IMR-90 (cell line): ENCODE measurements at regions of chr14 and their contacts with region 1.

Region 1: DNA sequence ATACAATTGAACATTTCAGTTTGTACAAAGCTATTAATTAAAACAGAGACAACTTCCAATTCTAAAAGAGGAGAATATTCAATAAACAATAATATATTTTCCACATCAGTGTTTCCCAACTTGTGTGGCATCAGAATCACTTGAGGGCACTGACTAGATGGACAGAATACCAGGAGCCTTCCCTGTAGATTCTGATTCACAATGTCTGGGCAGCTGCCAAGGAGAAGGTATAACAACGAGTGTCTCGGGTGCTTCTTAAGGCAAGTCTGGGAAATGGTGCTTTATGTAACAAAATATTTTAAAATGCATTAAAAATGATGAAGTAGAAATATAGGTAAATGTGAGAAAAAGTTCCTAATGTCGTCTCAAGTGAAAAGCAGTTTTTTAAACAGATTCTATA is 26.2 kb downstream of the GALC start:
- DNase-seq: peak; percentile 38
- ATAC-seq: no peak
- H3K4me3 ChIP-seq: no peak overlapping the region
- H3K27ac ChIP-seq: no peak overlapping the region
- H3K4me1 ChIP-seq: no peaks in the 10 kb centered on the region
- H3K27me3 ChIP-seq: no peaks in the 10 kb centered on the region
- CTCF ChIP-seq: no peak
- POLR2A ChIP-seq: no peak
- RAD21 ChIP-seq: no peak

Region 2: DNA sequence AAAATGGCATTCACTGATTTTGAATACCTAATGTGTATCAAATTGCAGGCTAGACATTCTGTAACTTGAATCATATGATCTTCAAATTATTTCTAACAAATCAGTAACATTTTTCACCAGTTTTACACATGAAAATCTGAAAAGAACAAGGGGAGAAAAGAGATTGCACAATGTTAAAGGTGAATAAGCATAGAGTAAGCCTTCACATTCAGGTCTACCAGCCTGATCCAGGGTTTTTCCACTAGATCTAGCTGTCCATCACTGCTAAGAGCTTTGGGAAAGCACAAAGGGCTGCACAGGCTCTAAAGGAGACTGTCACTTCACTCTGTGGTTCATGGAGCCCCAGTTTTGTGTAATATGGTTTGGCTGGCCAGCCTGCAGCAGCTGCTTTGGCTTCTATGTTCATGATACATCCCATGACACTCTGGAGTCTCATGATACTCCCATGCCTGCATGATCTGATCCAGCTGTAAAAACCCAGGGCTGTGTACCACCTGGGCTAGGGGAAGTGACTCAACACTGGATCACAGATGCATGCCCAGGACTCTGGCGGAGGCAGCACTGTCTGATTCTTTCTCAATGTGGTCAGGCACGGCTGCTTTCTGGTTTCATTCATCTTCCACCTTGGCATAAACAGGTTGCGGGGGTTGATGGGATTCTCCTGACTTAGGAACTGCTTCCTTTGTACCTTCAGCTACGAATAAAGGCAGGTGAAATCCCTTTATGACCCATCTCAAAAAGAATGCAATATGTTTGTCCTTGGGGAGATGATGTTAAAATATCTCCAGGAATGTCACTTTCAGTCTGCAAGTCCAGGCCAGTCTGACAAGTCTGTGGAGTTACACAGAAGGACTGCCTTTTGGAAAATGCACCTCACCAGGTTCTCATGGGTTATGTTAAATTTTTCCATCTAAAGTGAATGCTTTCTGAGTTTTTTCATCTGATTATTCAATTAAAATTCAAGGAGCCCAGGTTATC is 833.5 kb before region 1 on chr14:
- CTCF ChIA-PET with region 1: no interaction called
- POLR2A ChIA-PET with region 1: no interaction called
- dilution Hi-C with region 1: no loop called
- in situ Hi-C with region 1: no loop called
- intact Hi-C with region 1: no loop called
- DNase-seq: peak; percentile 94
- ATAC-seq: peak; percentile 79
- H3K4me3 ChIP-seq: no peak overlapping the region
- H3K27ac ChIP-seq: no peak overlapping the region
- H3K4me1 ChIP-seq: 0 out of 2 replicates have a peak, but pooled peaks cover 2% of the 10 kb centered on the region
- H3K27me3 ChIP-seq: no peaks in the 10 kb centered on the region
- CTCF ChIP-seq: no peak
- POLR2A ChIP-seq: no peak
- RAD21 ChIP-seq: no peak

Region 3: DNA sequence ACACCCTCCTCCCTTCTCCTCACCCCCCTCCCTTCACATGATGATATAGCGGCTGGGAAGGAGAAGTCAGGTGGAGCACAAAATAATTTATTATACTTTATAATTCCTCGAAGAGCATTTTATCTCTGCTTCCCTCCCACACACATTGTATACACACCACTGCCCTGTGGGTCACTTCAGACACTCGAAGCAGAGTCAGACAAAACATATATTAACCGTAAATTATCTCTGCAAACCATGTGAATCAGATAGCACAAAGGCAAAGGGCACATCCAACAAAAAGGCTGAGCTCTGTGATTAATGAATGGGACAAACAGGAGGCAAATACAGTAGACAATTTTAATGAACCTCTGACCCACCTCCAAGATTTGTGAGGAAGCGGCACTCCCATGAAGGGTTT is 424.5 kb before region 1 on chr14:
- CTCF ChIA-PET with region 1: no interaction called
- POLR2A ChIA-PET with region 1: no interaction called
- dilution Hi-C with region 1: no loop called
- in situ Hi-C with region 1: no loop called
- intact Hi-C with region 1: no loop called
- DNase-seq: no peak
- ATAC-seq: no peak
- H3K4me3 ChIP-seq: no peak overlapping the region
- H3K27ac ChIP-seq: no peak overlapping the region
- H3K4me1 ChIP-seq: no peaks in the 10 kb centered on the region
- H3K27me3 ChIP-seq: no peaks in the 10 kb centered on the region
- CTCF ChIP-seq: no peak
- POLR2A ChIP-seq: no peak
- RAD21 ChIP-seq: no peak

Region 4: DNA sequence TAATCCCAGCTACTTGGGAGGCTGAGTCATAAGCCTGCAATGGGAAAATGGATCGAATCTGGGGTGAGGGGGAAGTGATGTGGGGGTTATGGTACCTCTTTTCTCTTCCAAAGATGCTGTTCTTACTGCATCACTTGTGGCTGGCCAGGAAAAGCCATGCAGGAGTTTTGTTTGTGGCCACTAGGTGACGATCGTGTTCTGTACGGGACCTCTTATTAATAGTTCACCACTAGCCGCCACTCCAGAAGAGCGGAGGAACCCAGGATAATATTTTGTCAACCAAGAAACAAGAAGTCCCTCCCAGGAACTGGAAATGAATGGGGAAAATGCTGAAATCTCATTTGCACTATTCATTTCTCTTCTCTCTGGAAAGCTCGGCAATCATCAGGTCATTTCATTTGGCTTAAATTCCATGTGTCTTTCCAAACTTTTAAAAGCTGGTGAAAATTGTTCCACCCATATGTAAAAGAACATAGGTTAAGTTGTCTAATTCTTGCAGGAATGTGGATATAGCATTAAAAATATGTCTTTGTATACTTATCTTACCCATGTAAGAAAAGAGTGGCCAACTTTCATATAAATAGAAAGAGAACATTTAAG is 47.0 kb after region 1 on chr14:
- CTCF ChIA-PET with region 1: no interaction called
- POLR2A ChIA-PET with region 1: no interaction called
- dilution Hi-C with region 1: no loop called
- in situ Hi-C with region 1: no loop called
- intact Hi-C with region 1: no loop called
- DNase-seq: peak; percentile 58
- ATAC-seq: peak; percentile 94
- H3K4me3 ChIP-seq: no peak overlapping the region
- H3K27ac ChIP-seq: no peak overlapping the region
- H3K4me1 ChIP-seq: no peaks in the 10 kb centered on the region
- H3K27me3 ChIP-seq: no peaks in the 10 kb centered on the region; the same call in 1 of the 2 replicates
- CTCF ChIP-seq: peak; percentile 87
- POLR2A ChIP-seq: no peak
- RAD21 ChIP-seq: peak; percentile 78

Region 5: GRCh38 chr14:88078525-88078924 is 111.7 kb after region 1 on chr14:
- CTCF ChIA-PET with region 1: no interaction called
- POLR2A ChIA-PET with region 1: no interaction called
- dilution Hi-C with region 1: no loop called
- in situ Hi-C with region 1: no loop called
- intact Hi-C with region 1: no loop called
- DNase-seq: no peak
- ATAC-seq: no peak
- H3K4me3 ChIP-seq: no peak overlapping the region
- H3K27ac ChIP-seq: no peak overlapping the region
- H3K4me1 ChIP-seq: no peaks in the 10 kb centered on the region
- H3K27me3 ChIP-seq: no peaks in the 10 kb centered on the region
- CTCF ChIP-seq: no peak
- POLR2A ChIP-seq: no peak
- RAD21 ChIP-seq: no peak

Region 6: GRCh38 chr14:88264116-88264515 is 297.3 kb after region 1 on chr14:
- CTCF ChIA-PET with region 1: interaction called, 12 read pairs
- POLR2A ChIA-PET with region 1: no interaction called
- dilution Hi-C with region 1: no loop called
- in situ Hi-C with region 1: no loop called
- intact Hi-C with region 1: no loop called
- DNase-seq: no peak
- ATAC-seq: no peak
- H3K4me3 ChIP-seq: no peak overlapping the region
- H3K27ac ChIP-seq: no peak overlapping the region
- H3K4me1 ChIP-seq: no peaks in the 10 kb centered on the region
- H3K27me3 ChIP-seq: no peaks in the 10 kb centered on the region
- CTCF ChIP-seq: no peak
- POLR2A ChIP-seq: no peak
- RAD21 ChIP-seq: no peak